RWPE1 (cell line): ENCODE measurements at regions of chr10 and their contacts with region 1.

Region 1: GRCh38 chr10:116840389-116841075 is 8.8 kb upstream of the ENO4 start:
- DNase-seq: no peak
- H3K27ac ChIP-seq: no peak overlapping the region
- CTCF ChIP-seq: no peak

Region 2: GRCh38 chr10:115572706-115573455 is 1267.7 kb before region 1 on chr10:
- CTCF ChIA-PET with region 1: no interaction called
- POLR2A ChIA-PET with region 1: no interaction called
- DNase-seq: peak; percentile 3
- H3K27ac ChIP-seq: no peak overlapping the region
- CTCF ChIP-seq: no peak

Region 3: GRCh38 chr10:116593139-116593740 is 247.3 kb before region 1 on chr10:
- CTCF ChIA-PET with region 1: no interaction called
- POLR2A ChIA-PET with region 1: interaction called, 10 read pairs
- DNase-seq: no peak
- H3K27ac ChIP-seq: no peak overlapping the region
- CTCF ChIP-seq: no peak